CD14-positive monocyte (primary cell): ENCODE measurements at regions of chr11 and their contacts with region 1.

Region 1: GRCh38 chr11:1852877-1853276 is at the start of gene LSP1:
- DNase-seq: peak; percentile 86 to 95 (median 89)
- H3K4me3 ChIP-seq: peak within 1 kb of the TSS; percentile 61 to 88 (median 82)
- H3K4me3 Mint-ChIP-seq: peak within 1 kb of the TSS; percentile 98 to 100
- H3K27ac ChIP-seq: peak within 1 kb of the TSS; percentile 100
- H3K27ac Mint-ChIP-seq: peak within 1 kb of the TSS; percentile 96 to 100 (median 100)
- H3K4me1 ChIP-seq: peaks cover 92 to 97% of the 10 kb centered on the region in 2 donors
- H3K4me1 Mint-ChIP-seq: peaks cover 84% of the 10 kb centered on the region
- H3K27me3 ChIP-seq: no peaks in the 10 kb centered on the region
- H3K27me3 Mint-ChIP-seq: peaks cover 0 to 7% (median 0%) of the 10 kb centered on the region in 3 donors
- CTCF ChIP-seq: no peak
- polyA plus RNA-seq, gene LSP1: 387 to 646 (median 542) TPM

Region 2: DNA sequence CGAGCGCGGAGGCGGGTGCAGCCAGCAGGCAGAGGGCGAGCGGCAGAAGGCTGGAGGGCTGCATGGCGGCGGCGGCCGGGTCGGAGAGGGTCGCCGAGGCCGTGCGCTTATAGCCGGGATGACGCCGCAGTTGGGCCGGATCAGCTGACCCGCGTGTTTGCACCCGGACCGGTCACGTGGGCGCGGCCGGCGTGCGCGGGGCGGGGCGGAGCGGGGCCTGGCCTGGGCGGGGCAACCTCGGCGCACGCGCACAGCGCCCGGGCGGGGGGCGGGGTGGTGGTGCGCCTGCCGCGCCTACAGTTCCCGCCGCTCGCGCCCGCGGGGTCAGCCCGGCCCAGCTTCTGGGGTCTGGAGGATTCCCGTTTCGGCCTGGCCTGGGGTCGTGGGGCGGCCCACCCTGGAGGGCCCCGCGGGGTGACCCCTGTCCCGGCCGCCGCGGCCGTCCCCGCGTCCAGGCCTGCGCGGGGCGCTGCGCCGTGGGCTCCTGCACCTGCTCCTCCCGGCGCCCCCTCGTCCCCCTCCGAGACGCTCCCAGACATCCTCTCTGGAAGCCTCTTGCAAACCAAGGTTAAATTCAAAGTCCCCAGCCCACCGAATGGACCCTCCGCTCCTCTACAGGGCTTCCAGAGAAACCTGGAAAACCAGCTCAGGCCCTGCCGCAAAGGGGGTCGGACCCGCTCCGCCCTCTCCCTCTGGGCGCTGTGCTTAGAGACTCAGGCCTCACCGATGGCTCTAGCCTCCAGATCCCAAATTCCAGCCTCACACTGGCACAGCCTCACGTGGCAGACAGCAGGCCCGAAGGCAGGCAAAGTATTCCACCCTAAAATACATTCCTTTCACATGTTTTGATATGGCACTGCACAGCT is 88.8 kb before region 1 on chr11 and contains the start of gene CTSD:
- intact Hi-C with region 1: loop called in 1 of 2 experiments (anchors 5 kb)
- DNase-seq: peak; percentile 83 to 88 (median 84)
- H3K4me3 ChIP-seq: peak within 1 kb of the TSS; percentile 83 to 98 (median 90)
- H3K4me3 Mint-ChIP-seq: peak within 1 kb of the TSS; percentile 92 to 95
- H3K27ac ChIP-seq: peak within 1 kb of the TSS; percentile 95 to 97
- H3K27ac Mint-ChIP-seq: peak within 1 kb of the TSS; percentile 92 to 97 (median 96)
- H3K4me1 ChIP-seq: peaks cover 46 to 56% of the 10 kb centered on the region in 2 donors
- H3K4me1 Mint-ChIP-seq: peaks cover 43% of the 10 kb centered on the region
- H3K27me3 ChIP-seq: no peaks in the 10 kb centered on the region
- H3K27me3 Mint-ChIP-seq: peaks cover 0 to 3% (median 0%) of the 10 kb centered on the region in 3 donors
- CTCF ChIP-seq: no peak
- polyA plus RNA-seq, gene CTSD: 835 to 1,372 (median 855) TPM

Region 3: DNA sequence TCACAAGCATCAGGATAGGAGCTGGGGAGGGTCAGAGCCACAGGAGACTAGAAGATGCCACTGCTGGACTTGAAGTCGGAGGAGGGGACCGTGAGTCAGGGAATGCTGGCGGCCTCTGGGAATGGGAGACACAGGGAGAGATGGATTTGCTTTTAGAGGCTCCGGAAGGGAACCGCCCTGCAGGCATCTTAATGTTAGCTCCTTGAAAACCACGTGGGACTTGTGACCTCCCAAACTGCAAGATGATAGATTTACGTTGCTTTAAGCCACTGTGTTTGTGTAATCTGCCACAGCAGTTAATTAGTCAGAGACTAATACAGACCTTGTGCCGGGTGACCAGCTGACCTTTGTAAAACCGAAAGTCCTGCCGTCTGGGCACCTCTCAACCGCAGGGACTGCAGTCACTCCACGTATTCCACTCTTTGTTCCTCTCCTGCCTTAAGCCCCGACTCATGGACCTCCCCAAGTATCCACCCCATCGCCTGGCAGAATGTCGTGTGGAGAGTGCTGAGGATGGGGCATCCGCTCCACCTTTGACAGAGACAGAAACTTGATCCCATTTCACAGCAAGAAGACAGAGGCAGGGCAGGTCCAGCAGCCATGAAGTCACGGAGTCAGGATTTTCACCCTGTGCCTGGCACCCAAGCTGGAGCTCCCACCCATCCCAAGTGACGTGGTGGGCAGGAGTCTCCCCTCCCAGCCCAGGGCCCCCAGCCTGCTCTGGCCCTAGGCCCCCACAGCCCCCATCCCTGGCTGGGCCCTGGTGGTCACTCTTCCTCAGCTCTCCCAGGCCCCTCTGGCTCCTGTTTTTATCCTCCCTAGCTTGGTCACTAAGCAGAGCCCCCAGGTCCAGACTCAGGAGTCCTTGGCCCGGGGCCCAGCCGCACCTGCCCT is 69.8 kb before region 1 on chr11:
- intact Hi-C with region 1: loop called in 1 of 2 experiments (anchors 5 kb)
- DNase-seq: peak; percentile 95 to 97 (median 95)
- H3K4me3 ChIP-seq: peak overlapping the region in 1 of 3 experiments; percentile 46
- H3K4me3 Mint-ChIP-seq: peak overlapping the region; percentile 64 to 83
- H3K27ac ChIP-seq: peak overlapping the region; percentile 96 to 99
- H3K27ac Mint-ChIP-seq: peak overlapping the region; percentile 98 to 100 (median 98)
- H3K4me1 ChIP-seq: peaks cover 81 to 89% of the 10 kb centered on the region in 2 donors
- H3K4me1 Mint-ChIP-seq: peaks cover 92% of the 10 kb centered on the region
- H3K27me3 ChIP-seq: no peaks in the 10 kb centered on the region
- H3K27me3 Mint-ChIP-seq: peaks cover 2 to 12% (median 4%) of the 10 kb centered on the region in 3 donors
- CTCF ChIP-seq: no peak

Region 4: GRCh38 chr11:1837171-1838076 is 15.5 kb before region 1 on chr11:
- intact Hi-C with region 1: loop called in 1 of 2 experiments (anchors 1 kb)
- DNase-seq: peak; percentile 62 to 67 (median 64)
- H3K4me3 ChIP-seq: no peak overlapping the region
- H3K4me3 Mint-ChIP-seq: no peak overlapping the region
- H3K27ac ChIP-seq: no peak overlapping the region
- H3K27ac Mint-ChIP-seq: peak overlapping the region in 2 of 7 donors; percentile 30 to 60
- H3K4me1 ChIP-seq: peaks cover 56 to 60% of the 10 kb centered on the region in 2 donors
- H3K4me1 Mint-ChIP-seq: peaks cover 33% of the 10 kb centered on the region
- H3K27me3 ChIP-seq: peaks cover 0 to 10% of the 10 kb centered on the region in 2 donors
- H3K27me3 Mint-ChIP-seq: peaks cover 11 to 29% (median 12%) of the 10 kb centered on the region in 3 donors
- CTCF ChIP-seq: peak; percentile 99

Region 5: GRCh38 chr11:1863352-1864216 is 10.7 kb after region 1 on chr11:
- intact Hi-C with region 1: loop called in 1 of 2 experiments (anchors 1 kb)
- DNase-seq: peak; percentile 79 to 84 (median 84)
- H3K4me3 ChIP-seq: peak overlapping the region in 1 of 3 experiments; percentile 57
- H3K4me3 Mint-ChIP-seq: peak overlapping the region; percentile 65 to 69
- H3K27ac ChIP-seq: peak overlapping the region; percentile 70 to 81
- H3K27ac Mint-ChIP-seq: peak overlapping the region in 6 of 7 donors; percentile 83 to 96 (median 90)
- H3K4me1 ChIP-seq: peaks cover 42 to 58% of the 10 kb centered on the region in 2 donors
- H3K4me1 Mint-ChIP-seq: peaks cover 14% of the 10 kb centered on the region
- H3K27me3 ChIP-seq: no peaks in the 10 kb centered on the region
- H3K27me3 Mint-ChIP-seq: peaks cover 3 to 4% (median 4%) of the 10 kb centered on the region in 3 donors
- CTCF ChIP-seq: no peak

Region 6: GRCh38 chr11:1943977-1944376 is 91.1 kb after region 1 on chr11:
- intact Hi-C with region 1: no loop called
- DNase-seq: no peak
- H3K4me3 ChIP-seq: no peak overlapping the region
- H3K4me3 Mint-ChIP-seq: no peak overlapping the region
- H3K27ac ChIP-seq: no peak overlapping the region
- H3K27ac Mint-ChIP-seq: no peak overlapping the region
- H3K4me1 ChIP-seq: no peaks in the 10 kb centered on the region
- H3K4me1 Mint-ChIP-seq: peaks cover 3% of the 10 kb centered on the region
- H3K27me3 ChIP-seq: peaks cover 0 to 1% of the 10 kb centered on the region in 2 donors
- H3K27me3 Mint-ChIP-seq: peaks cover 0 to 2% (median 1%) of the 10 kb centered on the region in 3 donors
- CTCF ChIP-seq: no peak

Region 7: GRCh38 chr11:2314525-2315394 is 461.9 kb after region 1 on chr11:
- intact Hi-C with region 1: no loop called
- DNase-seq: no peak
- H3K4me3 ChIP-seq: no peak overlapping the region
- H3K4me3 Mint-ChIP-seq: no peak overlapping the region
- H3K27ac ChIP-seq: no peak overlapping the region
- H3K27ac Mint-ChIP-seq: peak overlapping the region in 2 of 7 donors; percentile 50 to 77
- H3K4me1 ChIP-seq: no peaks in the 10 kb centered on the region
- H3K4me1 Mint-ChIP-seq: no peaks in the 10 kb centered on the region
- H3K27me3 ChIP-seq: peaks cover 0 to 2% of the 10 kb centered on the region in 2 donors
- H3K27me3 Mint-ChIP-seq: peaks cover 2 to 8% (median 6%) of the 10 kb centered on the region in 3 donors
- CTCF ChIP-seq: no peak